Activated B cell treated with CpG ODN at 0.5 μM for 24 hours (primary cell): ENCODE measurements at regions of chr1 and their contacts with region 1.

Region 1: DNA sequence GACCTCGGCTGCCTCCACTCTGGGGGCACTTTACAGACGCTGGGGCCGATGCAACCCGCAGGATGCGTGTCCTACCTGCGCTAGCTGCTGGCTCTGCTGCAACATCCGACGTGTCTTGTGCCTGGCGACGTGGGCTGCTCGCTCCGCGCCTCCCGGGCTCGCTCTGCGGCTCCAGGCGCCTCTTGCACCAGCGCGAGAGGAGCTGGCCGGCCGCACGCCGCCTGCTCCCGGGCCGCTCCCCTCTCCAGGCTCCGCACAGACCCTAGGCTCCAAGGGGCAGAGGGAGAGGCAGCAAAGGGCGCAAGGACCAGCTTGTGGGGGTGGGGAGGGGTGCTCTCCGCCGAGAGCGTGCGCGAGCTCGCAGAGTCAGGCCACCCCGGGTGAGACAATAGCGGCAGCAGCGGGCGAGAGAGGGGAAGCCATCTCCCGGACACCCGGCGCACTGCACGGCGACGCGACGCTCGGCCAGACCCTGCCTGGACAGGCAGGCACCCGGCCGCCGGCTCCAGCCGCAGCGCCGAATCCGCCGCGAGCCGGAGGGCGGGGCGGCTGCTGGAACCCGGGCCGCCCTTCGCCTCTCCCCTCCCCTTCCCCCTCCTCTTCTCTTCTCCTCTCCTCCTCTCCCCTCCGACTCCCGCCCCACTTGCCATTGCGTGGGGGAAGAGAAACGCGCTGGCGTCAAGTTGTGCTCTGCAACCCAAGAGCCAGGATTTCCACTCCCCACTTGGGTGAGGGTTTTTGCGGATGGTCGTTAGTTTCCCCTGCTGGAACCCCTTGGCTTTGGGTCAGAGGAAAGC is at the start of gene PIK3C2B:
- DNase-seq: peak; percentile 71
- ATAC-seq: peak; percentile 75
- H3K4me3 Mint-ChIP-seq: peak within 1 kb of the TSS; percentile 97
- H3K27ac Mint-ChIP-seq: peak within 1 kb of the TSS; percentile 97
- H3K4me1 Mint-ChIP-seq: peaks cover 80% of the 10 kb centered on the region
- H3K27me3 Mint-ChIP-seq: no peaks in the 10 kb centered on the region
- CTCF ChIP-seq: no peak
- total RNA-seq, gene PIK3C2B: 127 and 151 TPM in 2 replicates

Region 2: GRCh38 chr1:204254031-204254661 is 240.3 kb before region 1 on chr1:
- CTCF ChIA-PET with region 1: no interaction called
- POLR2A ChIA-PET with region 1: no interaction called
- intact Hi-C with region 1: no loop called
- DNase-seq: no peak
- ATAC-seq: no peak
- H3K4me3 Mint-ChIP-seq: no peak overlapping the region
- H3K27ac Mint-ChIP-seq: no peak overlapping the region
- H3K4me1 Mint-ChIP-seq: no peaks in the 10 kb centered on the region
- H3K27me3 Mint-ChIP-seq: no peaks in the 10 kb centered on the region
- CTCF ChIP-seq: no peak

Region 3: GRCh38 chr1:204411451-204412204 is 82.9 kb before region 1 on chr1 and contains the start of gene PPP1R15B:
- CTCF ChIA-PET with region 1: no interaction called
- POLR2A ChIA-PET with region 1: interaction called, 17 read pairs
- intact Hi-C with region 1: no loop called
- DNase-seq: peak; percentile 96
- ATAC-seq: peak; percentile 89
- H3K4me3 Mint-ChIP-seq: peak within 1 kb of the TSS; percentile 99
- H3K27ac Mint-ChIP-seq: peak within 1 kb of the TSS; percentile 99
- H3K4me1 Mint-ChIP-seq: peaks cover 29% of the 10 kb centered on the region
- H3K27me3 Mint-ChIP-seq: no peaks in the 10 kb centered on the region
- CTCF ChIP-seq: no peak
- total RNA-seq, gene PPP1R15B: 60.4 and 70.6 TPM in 2 replicates

Region 4: DNA sequence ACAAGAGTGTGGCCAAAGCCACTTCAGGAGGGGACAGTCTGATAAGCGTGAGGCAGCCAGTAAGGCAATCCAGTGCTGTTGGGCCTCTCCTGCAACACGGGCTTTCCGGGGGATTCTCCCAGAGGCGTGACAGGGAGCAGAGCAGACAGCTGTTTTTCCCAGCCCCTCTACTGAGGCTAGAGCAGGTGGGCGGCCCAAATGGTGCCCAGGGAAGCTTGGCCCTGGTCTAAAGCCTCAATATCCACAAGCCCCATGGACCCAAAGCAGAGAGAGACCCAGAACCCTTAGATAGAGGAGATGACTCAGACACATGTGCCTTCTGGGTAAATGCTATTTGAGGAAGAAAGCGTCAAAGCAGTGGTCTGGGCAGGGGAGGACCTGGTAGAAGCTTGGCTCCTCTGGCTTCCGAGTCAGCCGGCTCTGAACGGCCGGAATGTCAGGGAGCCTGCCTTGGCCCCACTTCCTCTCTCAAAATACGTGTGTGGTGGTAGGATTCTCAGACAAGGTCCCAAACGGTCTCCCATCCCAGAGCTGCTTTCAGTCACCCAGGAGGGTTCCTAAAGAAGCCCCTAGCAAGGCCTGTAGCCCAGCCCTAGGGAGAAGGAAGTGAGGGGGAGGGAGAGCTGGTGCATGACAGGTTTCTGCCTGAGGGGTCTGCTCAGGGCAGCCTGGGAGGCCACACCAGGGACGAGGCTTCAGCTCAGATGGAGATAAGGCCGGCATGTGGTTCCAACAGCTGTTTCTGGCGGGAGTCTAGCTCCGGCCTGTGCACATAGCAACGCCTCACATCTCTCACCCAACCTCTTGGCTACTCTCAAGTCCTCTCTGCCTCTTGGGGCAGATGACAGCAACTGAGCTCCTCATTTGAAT is 28.7 kb before region 1 on chr1:
- CTCF ChIA-PET with region 1: interaction called, 37 read pairs
- POLR2A ChIA-PET with region 1: interaction called, 96 read pairs
- intact Hi-C with region 1: loop called (anchors 1 kb)
- DNase-seq: peak; percentile 49
- ATAC-seq: peak; percentile 53
- H3K4me3 Mint-ChIP-seq: peak overlapping the region; percentile 52
- H3K27ac Mint-ChIP-seq: peak overlapping the region; percentile 94
- H3K4me1 Mint-ChIP-seq: peaks cover 85% of the 10 kb centered on the region
- H3K27me3 Mint-ChIP-seq: no peaks in the 10 kb centered on the region
- CTCF ChIP-seq: no peak

Region 5: GRCh38 chr1:204480515-204480914 is 14.0 kb before region 1 on chr1:
- CTCF ChIA-PET with region 1: interaction called, 75 read pairs
- POLR2A ChIA-PET with region 1: interaction called, 262 read pairs
- intact Hi-C with region 1: loop called (anchors 1 kb)
- DNase-seq: peak; percentile 40
- ATAC-seq: peak; percentile 57
- H3K4me3 Mint-ChIP-seq: peak overlapping the region; percentile 76
- H3K27ac Mint-ChIP-seq: peak overlapping the region; percentile 98
- H3K4me1 Mint-ChIP-seq: peaks cover 98% of the 10 kb centered on the region
- H3K27me3 Mint-ChIP-seq: no peaks in the 10 kb centered on the region
- CTCF ChIP-seq: no peak